Activated naive CD4-positive, alpha-beta T cell treated with anti-CD3 and anti-CD28 coated beads for 36 hours (primary cell): ENCODE measurements at regions of chr16 and their contacts with region 1.

Region 1: GRCh38 chr16:67641779-67642708 is 2.9 kb upstream of the CARMIL2 start:
- DNase-seq: no peak
- H3K4me3 Mint-ChIP-seq: no peak overlapping the region
- H3K27ac Mint-ChIP-seq: no peak overlapping the region
- H3K4me1 Mint-ChIP-seq: peaks cover 9% of the 10 kb centered on the region
- H3K27me3 Mint-ChIP-seq: no peaks in the 10 kb centered on the region

Region 2: DNA sequence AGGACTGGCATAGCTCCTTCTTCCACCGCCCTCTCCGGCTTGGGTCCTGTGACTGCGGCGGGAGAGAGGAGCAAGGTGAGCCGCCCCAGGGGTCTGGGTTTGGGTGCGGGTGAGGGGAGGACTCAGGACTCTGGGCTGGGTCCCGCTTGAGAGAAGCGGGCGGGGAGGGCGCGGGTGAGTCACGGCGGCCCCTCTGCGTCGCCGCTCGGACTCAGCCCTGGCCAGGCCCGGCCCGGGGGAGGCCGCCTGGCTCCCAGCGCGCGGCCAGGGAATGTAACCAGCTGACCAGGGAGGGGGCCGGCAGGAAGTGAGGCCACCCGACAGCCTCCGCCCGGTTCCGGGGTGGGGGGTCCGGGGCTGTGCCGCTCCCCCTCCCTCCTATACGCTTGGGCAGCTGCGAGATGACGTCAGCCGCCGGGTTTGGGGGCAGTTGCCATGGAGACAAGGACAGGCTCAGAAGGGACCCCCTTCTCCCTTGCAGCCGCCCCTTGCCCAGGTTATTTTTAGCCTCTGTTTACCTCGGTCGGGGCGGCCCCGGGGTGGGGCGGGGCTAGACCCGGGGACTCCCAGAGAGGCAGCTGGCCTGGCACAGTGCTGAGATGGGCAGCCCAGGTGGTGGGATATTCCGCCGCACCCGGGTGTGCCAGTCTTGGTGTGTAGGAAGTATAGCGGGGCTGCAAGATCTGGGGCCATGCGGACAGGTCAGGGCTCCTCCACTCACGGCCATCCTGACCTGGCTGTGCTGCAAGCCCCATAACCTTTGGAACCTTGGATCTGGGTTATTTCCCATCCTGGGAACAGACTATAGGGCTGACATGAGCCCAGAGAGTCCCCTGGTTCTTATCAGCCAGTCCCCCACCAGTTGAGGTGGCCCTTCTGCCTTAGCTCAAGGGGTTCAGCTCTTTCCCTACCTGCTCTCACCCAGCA is 111.8 kb before region 1 on chr16:
- CTCF ChIA-PET with region 1: interaction called, 13 read pairs
- intact Hi-C with region 1: no loop called
- DNase-seq: peak; percentile 54
- H3K4me3 Mint-ChIP-seq: peak overlapping the region; percentile 68
- H3K27ac Mint-ChIP-seq: no peak overlapping the region
- H3K4me1 Mint-ChIP-seq: peaks cover 14% of the 10 kb centered on the region
- H3K27me3 Mint-ChIP-seq: peaks cover 20% of the 10 kb centered on the region

Region 3: GRCh38 chr16:67555795-67556212 is 86.2 kb before region 1 on chr16:
- CTCF ChIA-PET with region 1: interaction called, 14 read pairs
- intact Hi-C with region 1: no loop called
- DNase-seq: peak; percentile 41
- H3K4me3 Mint-ChIP-seq: peak overlapping the region; percentile 46
- H3K27ac Mint-ChIP-seq: peak overlapping the region; percentile 98
- H3K4me1 Mint-ChIP-seq: peaks cover 62% of the 10 kb centered on the region
- H3K27me3 Mint-ChIP-seq: no peaks in the 10 kb centered on the region